OCI-LY7 (cell line): ENCODE measurements at regions of chr5 and their contacts with region 1.

Region 1: DNA sequence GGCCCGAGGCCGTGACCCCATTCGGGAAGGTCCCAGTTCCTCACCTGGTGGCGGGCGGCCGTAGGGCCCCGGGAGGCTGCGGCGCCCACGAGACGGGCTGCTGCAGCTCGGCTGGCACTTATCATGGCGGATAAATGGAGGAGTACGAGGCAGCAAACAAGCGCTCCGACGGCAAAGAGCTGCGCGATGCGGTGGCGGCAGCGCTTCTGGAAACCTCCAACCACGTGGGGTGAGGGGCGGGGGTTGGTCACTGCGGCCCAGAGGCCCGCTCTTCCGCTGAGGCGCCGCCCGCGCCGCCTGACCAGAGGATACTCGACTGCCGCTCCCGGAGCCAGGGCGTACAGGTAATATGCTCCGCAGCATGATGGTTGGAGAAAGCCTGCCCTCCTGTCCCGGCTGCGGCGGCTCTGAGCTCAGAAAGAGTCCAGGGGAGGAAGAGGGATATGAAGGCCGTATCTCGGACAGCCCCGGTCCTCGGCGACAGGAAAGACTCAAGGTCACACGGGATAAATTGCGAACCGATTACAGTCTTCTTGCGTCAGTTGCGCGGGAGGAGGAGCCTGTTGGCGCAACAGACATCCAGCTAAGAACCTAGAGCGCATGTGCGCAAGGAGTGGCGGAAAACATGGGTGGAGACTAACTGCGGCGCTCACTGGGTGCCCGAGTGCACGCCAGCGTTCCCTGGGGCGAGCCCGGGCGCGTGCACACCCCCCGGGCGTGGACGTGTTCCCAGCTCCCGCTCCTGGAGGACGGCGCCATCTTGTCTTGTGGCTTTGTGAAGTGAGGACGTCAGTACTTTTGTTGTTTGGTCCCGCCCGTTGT is at the start of gene HSPA9:
- DNase-seq: peak; percentile 99
- H3K4me3 ChIP-seq: peak within 1 kb of the TSS; percentile 95
- H3K27ac ChIP-seq: peak within 1 kb of the TSS; percentile 80
- H3K4me1 ChIP-seq: peaks cover 31% of the 10 kb centered on the region
- CTCF ChIP-seq: no peak
- total RNA-seq, gene HSPA9: 290 and 326 TPM in 2 replicates

Region 2: GRCh38 chr5:137310051-137310730 is 1265.2 kb before region 1 on chr5:
- CTCF ChIA-PET with region 1: no interaction called
- POLR2A ChIA-PET with region 1: no interaction called
- intact Hi-C with region 1: no loop called
- DNase-seq: no peak
- H3K4me3 ChIP-seq: no peak overlapping the region
- H3K27ac ChIP-seq: no peak overlapping the region
- H3K4me1 ChIP-seq: no peaks in the 10 kb centered on the region
- CTCF ChIP-seq: no peak

Region 3: GRCh38 chr5:138035605-138036537 is 539.5 kb before region 1 on chr5:
- CTCF ChIA-PET with region 1: no interaction called
- POLR2A ChIA-PET with region 1: no interaction called
- intact Hi-C with region 1: loop called (anchors 10 kb)
- DNase-seq: peak; percentile 90
- H3K4me3 ChIP-seq: no peak overlapping the region
- H3K27ac ChIP-seq: no peak overlapping the region
- H3K4me1 ChIP-seq: peaks cover 38% of the 10 kb centered on the region
- CTCF ChIP-seq: peak; percentile 99

Region 4: GRCh38 chr5:138213161-138214029 is 362.0 kb before region 1 on chr5 and contains the start of gene CDC23:
- CTCF ChIA-PET with region 1: no interaction called
- POLR2A ChIA-PET with region 1: no interaction called
- intact Hi-C with region 1: loop called (anchors 2 kb)
- DNase-seq: peak; percentile 98
- H3K4me3 ChIP-seq: peak within 1 kb of the TSS; percentile 97
- H3K27ac ChIP-seq: peak within 1 kb of the TSS; percentile 43
- H3K4me1 ChIP-seq: peaks cover 15% of the 10 kb centered on the region
- CTCF ChIP-seq: no peak
- total RNA-seq, gene CDC23: 31.8 and 46.7 TPM in 2 replicates

Region 5: GRCh38 chr5:138542956-138543729 is 32.3 kb before region 1 on chr5 and contains the start of gene ETF1:
- CTCF ChIA-PET with region 1: interaction called, 5 read pairs
- POLR2A ChIA-PET with region 1: interaction called, 12 read pairs
- intact Hi-C with region 1: loop called (anchors 1 kb)
- DNase-seq: peak; percentile 99
- H3K4me3 ChIP-seq: peak within 1 kb of the TSS; percentile 95
- H3K27ac ChIP-seq: peak within 1 kb of the TSS; percentile 62
- H3K4me1 ChIP-seq: peaks cover 39% of the 10 kb centered on the region
- CTCF ChIP-seq: no peak
- total RNA-seq, gene ETF1: 66.7 and 76.0 TPM in 2 replicates

Region 6: DNA sequence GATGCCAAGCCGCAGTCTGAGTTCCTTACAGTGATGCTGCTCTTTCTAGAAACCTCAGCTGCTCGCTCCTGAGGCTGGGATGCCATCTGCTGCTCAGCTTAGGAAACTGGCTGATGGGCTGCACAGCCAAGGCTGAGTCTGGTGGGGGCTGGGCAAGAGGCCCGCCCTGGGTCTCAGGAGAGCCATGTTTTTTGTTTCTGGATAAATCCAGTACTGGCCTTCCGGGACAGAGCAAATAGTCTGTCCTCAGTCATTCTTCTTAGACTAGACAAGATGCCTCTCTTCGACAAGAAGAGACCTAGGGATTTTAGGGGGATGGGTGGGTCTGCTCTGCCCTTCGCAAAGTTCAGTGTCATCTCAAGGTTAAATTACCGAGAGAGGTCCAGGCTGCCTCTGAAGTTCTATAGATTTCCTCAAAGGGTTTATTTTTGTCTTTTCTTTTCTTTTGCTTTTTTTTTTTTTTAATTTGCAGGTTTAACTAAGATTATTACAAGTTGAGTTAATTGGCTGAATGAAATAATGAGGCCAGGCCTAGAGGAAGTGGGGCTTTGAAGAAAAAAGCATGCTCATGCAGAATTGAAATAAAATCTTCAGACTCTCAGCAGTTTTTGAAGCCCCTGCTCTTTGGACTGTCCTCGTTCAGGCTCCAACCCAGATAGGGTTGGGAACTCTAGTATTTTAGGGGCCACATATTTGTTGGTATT is 687.5 kb after region 1 on chr5:
- CTCF ChIA-PET with region 1: no interaction called
- POLR2A ChIA-PET with region 1: no interaction called
- intact Hi-C with region 1: loop called (anchors 5 kb)
- DNase-seq: peak; percentile 69
- H3K4me3 ChIP-seq: no peak overlapping the region
- H3K27ac ChIP-seq: no peak overlapping the region
- H3K4me1 ChIP-seq: peaks cover 4% of the 10 kb centered on the region
- CTCF ChIP-seq: peak; percentile 81

Region 7: DNA sequence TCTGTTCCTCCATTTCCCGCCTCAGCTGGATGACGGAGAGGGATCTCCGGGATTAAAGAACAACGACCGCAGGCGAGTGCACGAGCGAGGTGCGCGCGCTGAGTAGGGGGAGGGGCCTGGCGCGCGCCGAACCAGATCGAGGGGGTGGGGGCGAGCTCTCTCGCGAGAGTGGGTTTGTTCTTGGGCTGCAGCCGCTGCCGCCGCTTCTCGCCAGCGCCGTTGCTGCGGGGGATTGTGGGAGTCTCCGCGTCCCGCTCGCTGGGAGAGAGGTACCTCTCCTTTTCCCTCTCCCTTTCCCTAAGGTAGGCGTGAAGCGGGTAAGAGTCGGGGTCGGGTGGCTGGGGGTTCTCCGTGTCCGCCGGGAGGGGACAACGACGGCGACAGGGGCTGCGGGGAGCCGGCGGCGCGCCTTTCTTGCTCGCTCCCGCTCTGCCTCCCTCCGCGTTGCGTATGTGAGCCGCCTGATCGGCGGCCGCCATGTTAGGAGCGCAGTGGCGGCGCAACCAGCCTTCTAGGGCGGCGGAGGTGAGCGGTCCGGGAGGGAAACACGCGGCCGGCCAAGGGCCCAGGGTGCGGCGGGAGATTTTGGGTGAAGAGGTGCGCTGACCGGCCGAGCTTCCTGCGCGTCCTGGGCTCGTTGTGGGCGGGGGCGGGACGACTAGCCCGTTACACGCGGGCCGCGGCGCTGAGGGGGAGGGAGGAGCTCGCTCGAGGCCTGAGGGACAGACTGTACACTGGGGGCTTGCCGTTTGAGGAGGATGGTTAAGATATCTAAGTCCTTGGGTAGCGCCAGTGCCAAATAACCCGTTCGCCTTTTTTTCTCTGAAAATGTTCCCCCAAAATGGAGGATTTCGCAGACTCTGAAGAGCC is 718.3 kb after region 1 on chr5 and contains the start of gene MATR3:
- CTCF ChIA-PET with region 1: no interaction called
- POLR2A ChIA-PET with region 1: no interaction called
- intact Hi-C with region 1: loop called (anchors 10 kb)
- DNase-seq: peak; percentile 95
- H3K4me3 ChIP-seq: peak within 1 kb of the TSS; percentile 97
- H3K27ac ChIP-seq: peak within 1 kb of the TSS; percentile 84
- H3K4me1 ChIP-seq: peaks cover 42% of the 10 kb centered on the region
- CTCF ChIP-seq: no peak
- total RNA-seq, gene MATR3: 205 and 276 TPM in 2 replicates

Region 8: DNA sequence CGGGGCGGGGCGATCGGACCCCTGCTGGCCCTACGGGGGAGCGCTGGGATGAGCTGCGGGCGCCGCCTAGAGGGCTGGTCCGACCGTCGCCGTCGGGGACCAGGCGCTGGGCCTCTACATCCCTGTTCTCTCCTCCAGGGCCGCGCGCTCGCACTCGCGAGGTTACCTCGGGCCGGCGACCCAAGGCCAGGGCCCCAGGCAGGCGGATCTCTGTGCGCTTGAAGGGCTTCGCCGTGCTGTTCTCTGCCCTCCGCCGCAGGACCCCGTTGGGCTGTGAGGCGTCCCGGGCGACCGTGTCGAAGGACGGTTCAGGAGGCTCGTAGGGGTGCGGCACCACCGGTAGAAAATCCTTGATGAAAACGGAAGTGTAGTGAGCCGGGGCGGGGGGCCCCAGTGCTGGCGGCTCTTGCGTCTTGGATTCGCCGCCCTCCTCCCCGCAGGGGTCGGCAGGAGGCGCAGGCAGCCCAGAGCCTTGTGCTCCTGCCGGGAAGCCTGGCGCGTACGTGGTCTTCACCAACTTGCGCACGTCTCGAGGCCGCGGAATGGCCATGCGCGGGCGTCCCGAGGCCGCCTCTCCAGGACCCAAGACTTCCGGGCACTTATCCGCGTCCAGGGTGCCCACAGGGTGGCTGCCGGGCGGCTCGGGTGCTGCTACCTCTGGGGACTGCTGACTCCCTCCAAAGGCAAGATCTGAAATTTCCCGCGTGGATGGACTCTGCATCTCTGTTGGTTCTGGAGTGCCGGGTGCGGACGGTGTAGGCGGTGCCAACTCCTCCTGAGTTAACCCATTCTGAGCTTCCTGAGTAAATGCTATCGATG is 817.5 kb after region 1 on chr5:
- CTCF ChIA-PET with region 1: no interaction called
- POLR2A ChIA-PET with region 1: no interaction called
- intact Hi-C with region 1: loop called (anchors 5 kb)
- DNase-seq: peak; percentile 94
- H3K4me3 ChIP-seq: peak overlapping the region; percentile 79
- H3K27ac ChIP-seq: peak overlapping the region; percentile 90
- H3K4me1 ChIP-seq: peaks cover 62% of the 10 kb centered on the region
- CTCF ChIP-seq: peak; percentile 81